Heart left ventricle (tissue), 16 donors: ENCODE measurements at regions of chr11 and their contacts with region 1.

Region 1: DNA sequence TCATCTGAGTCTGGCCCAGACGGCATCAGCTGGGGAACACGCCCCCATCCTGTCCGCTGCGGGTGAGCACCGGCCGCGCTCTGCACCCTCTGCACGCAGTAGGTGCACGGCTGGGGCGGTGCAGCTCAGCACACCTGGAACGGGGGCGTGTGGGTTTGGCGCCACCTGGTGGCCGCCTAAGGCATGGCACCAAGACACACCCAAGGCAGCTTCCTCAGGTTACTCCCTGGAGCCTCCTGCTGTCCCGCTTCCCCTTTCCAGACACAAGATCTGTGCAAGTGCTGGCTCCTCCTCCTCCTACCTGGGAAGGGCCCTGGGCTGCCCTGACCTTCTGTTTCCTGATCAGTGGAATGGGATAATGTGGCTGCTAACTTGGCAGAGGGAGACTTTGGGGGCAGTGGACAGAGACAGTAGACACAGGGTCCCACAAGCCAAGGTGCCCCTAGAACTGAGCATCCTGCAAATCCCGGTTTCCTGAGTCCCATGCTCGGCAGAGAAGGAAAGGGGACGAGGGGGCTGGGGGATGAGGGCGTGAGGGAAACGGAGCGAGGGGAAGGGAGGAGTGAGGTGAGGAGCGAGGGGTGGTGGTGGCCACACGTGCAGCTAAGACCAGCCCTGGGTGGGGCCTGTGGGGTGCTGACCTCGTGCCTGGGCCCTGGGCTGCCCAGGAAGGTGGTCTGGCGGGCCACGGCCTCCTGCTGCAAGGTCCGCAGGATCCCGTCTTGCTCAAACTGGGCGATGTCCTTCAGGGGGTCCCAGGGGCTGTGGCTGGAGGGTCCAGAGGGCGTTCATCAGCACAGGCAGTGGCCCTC is 34.8 kb upstream of the CARS1 start:
- DNase-seq: peak; percentile 57 to 87 (median 67)
- ATAC-seq: peak; percentile 54 to 68 (median 66)
- H3K4me3 ChIP-seq: no peak overlapping the region
- H3K27ac ChIP-seq: no peak overlapping the region
- H3K4me1 ChIP-seq: peaks cover 0 to 35% (median 17%) of the 10 kb centered on the region in 12 donors
- H3K27me3 ChIP-seq: no peaks in the 10 kb centered on the region
- CTCF ChIP-seq: peak; percentile 92 to 100 (median 99)
- POLR2A ChIP-seq: no peak

Region 2: DNA sequence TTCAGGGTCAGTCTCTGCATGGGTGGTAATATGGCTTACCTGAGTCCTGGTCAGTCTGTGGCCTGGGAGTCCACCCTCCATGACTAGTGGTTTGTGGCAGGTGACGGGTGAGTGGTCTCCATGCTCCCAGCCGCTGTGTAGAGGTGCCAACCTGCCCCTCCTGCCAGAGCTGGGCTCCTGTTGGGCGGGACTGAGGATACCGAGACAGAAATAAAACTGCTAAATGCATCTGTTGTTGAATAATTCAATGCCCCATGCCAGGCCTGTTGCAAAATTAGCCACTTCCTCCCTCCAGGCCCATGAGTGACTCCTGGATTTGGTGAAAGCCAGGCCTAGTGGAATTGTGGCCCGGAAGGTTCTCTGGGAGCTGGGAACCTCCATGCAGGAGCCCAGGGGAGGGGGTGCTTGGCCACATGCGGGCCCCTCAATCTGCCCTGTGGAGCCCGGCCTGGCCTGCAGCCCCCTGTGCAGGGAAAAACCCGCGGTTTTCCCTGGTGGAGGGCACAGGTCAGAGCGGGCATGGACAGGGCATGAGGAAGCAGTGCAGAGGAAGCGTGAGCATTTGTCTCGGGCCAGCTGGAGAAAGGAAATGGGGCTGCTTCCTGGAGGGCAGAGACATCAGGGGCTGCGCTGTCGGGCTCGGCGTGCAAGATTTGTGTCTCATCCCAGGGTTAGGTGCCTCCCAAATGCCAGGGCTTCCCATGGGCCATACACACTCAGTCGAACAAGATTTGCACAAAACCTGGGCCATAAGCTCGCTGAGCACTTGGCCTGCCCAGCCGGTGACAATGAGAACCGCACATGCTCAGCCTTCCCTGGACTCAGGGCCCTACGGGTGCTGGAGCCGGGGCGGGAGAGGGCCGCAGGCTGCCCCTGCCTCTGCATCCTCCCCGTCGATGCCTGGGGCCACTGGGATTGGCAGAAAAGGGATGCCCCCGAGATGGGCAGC is 580.3 kb before region 1 on chr11:
- intact Hi-C with region 1: no loop called
- DNase-seq: peak; percentile 40 to 72 (median 63)
- ATAC-seq: peak; percentile 40 to 67 (median 48)
- H3K4me3 ChIP-seq: no peak overlapping the region
- H3K27ac ChIP-seq: peak overlapping the region in 11 of 12 donors; percentile 32 to 79 (median 77)
- H3K4me1 ChIP-seq: peaks cover 0 to 79% (median 53%) of the 10 kb centered on the region in 12 donors
- H3K27me3 ChIP-seq: no peaks in the 10 kb centered on the region
- CTCF ChIP-seq: no peak
- POLR2A ChIP-seq: no peak

Region 3: DNA sequence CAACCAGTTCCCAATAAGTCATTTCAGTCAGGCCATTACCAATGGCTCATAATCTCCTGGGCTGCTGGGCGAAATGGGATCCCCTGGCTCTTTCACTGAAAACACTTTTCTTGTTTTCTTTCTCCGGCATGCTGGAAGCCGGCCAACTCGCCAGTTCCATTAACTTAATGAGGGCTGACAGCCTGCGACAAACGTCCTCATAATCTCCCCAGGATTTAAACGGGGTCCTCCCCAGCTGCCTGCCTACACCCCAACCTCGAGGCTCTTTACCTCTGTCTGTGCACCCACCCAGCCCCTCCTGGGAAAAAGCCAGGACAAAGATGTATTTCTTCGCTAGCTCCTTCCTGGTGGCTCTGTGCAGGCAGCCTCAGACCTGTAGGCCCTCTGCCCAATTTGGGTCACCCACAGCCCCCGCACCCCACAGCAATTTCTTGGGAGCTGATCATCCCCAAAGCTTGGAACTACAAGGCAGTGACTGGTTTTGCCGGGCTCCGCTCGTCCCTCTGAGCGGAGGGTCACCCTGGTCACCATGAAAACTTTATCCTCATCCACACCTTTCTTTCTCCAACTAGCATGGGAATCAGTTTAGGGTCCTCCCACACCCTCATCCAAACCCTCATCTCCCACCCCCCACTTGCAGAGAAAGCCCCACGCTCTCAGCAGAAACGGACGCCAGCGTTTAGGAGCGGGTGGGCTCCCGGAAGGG is 341.2 kb before region 1 on chr11:
- intact Hi-C with region 1: no loop called
- DNase-seq: peak in 3 of 5 donors; percentile 18 to 61 (median 22)
- ATAC-seq: no peak
- H3K4me3 ChIP-seq: no peak overlapping the region
- H3K27ac ChIP-seq: no peak overlapping the region
- H3K4me1 ChIP-seq: no peaks in the 10 kb centered on the region
- H3K27me3 ChIP-seq: no peaks in the 10 kb centered on the region
- CTCF ChIP-seq: no peak
- POLR2A ChIP-seq: no peak

Region 4: GRCh38 chr11:2975594-2975993 is 116.4 kb before region 1 on chr11:
- intact Hi-C with region 1: loop called in 2 of 10 experiments (anchors 5 kb)
- DNase-seq: peak in 1 of 5 donors; percentile 22
- ATAC-seq: peak; percentile 60 to 87 (median 78)
- H3K4me3 ChIP-seq: no peak overlapping the region
- H3K27ac ChIP-seq: no peak overlapping the region
- H3K4me1 ChIP-seq: peaks cover 0 to 28% (median 10%) of the 10 kb centered on the region in 12 donors
- H3K27me3 ChIP-seq: no peaks in the 10 kb centered on the region
- CTCF ChIP-seq: peak in 11 of 12 donors; percentile 24 to 54 (median 42)
- POLR2A ChIP-seq: no peak

Region 5: GRCh38 chr11:3037040-3037944 is 54.7 kb before region 1 on chr11:
- intact Hi-C with region 1: loop called (anchors 1 to 2 kb)
- DNase-seq: peak; percentile 79 to 90 (median 81)
- ATAC-seq: peak; percentile 59 to 79 (median 76)
- H3K4me3 ChIP-seq: no peak overlapping the region
- H3K27ac ChIP-seq: peak overlapping the region in 4 of 12 donors; percentile 18 to 58 (median 43)
- H3K4me1 ChIP-seq: peaks cover 0 to 32% (median 9%) of the 10 kb centered on the region in 12 donors
- H3K27me3 ChIP-seq: no peaks in the 10 kb centered on the region
- CTCF ChIP-seq: peak; percentile 72 to 91 (median 81)
- POLR2A ChIP-seq: no peak

Region 6: DNA sequence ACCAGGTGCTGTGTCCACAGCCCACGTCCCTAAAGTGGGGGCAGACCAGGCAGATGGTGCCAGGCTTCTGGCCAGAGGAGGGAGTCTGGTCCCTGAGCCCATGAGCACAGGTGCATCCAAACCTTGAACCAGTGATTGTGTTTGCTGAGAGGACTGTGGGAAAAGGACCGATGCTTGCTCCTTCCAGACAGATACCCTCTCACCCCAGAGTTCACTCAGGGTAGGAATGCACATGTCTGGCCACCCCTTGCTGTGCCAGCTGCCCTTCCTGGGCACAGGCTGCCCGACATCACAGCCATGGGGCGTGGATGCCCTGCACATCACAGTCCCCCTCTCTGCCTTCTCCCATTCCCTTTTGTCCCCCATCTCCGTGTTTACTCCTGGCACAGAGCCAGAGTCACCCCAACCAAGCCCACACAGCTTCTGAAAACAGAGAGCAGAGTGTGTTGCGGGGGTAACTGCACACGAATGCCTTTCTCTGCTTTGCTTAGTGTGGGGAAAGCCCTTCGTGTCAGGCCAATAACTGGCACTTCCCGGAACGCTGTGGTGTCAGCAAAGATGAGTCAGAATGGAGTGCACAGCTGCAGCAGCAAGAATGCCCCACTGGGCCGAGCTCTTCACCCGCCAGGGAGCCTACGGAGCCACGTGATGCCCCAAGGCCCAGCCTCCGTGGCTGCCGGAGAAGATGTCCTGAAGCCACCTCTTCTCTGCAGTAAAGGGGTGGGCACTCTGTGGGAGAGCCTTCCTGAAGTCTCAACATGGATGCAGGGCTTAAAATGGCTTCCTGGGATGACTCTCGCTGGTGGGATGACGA is 42.4 kb before region 1 on chr11:
- intact Hi-C with region 1: loop called in 1 of 10 experiments (anchors 5 kb)
- DNase-seq: peak; percentile 53 to 80 (median 69)
- ATAC-seq: peak; percentile 59 to 87 (median 86)
- H3K4me3 ChIP-seq: no peak overlapping the region
- H3K27ac ChIP-seq: peak overlapping the region in 5 of 12 donors; percentile 25 to 67 (median 49)
- H3K4me1 ChIP-seq: peaks cover 4 to 48% (median 31%) of the 10 kb centered on the region in 12 donors
- H3K27me3 ChIP-seq: no peaks in the 10 kb centered on the region
- CTCF ChIP-seq: peak in 3 of 12 donors; percentile 17 to 42 (median 41)
- POLR2A ChIP-seq: no peak

Region 7: DNA sequence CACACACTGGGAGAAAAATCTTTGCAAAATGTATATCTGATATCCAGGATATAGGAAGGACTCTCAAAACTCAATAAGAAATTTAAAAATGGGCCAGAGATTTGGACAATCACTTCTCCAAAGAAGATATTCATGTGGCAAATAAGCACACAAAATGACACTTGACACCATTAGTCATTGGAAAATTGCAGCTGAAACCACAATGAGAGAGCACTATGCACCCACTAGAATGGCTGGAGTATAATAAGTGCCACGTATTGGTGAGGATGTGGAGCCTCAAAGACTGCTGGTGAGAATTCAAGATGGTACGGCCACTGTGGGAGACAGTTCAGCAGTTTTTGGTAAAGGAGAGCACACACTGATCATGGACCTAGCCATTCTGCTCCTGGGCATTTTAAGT is 85.9 kb after region 1 on chr11:
- intact Hi-C with region 1: no loop called
- DNase-seq: no peak
- ATAC-seq: no peak
- H3K4me3 ChIP-seq: no peak overlapping the region
- H3K27ac ChIP-seq: no peak overlapping the region
- H3K4me1 ChIP-seq: no peaks in the 10 kb centered on the region
- H3K27me3 ChIP-seq: no peaks in the 10 kb centered on the region
- CTCF ChIP-seq: no peak
- POLR2A ChIP-seq: no peak

Region 8: GRCh38 chr11:3217676-3218482 is 125.9 kb after region 1 on chr11:
- intact Hi-C with region 1: loop called in 2 of 10 experiments (anchors 5 to 10 kb)
- DNase-seq: peak in 2 of 5 donors; percentile 11 to 51
- ATAC-seq: no peak
- H3K4me3 ChIP-seq: no peak overlapping the region
- H3K27ac ChIP-seq: no peak overlapping the region
- H3K4me1 ChIP-seq: peaks cover 0 to 15% (median 0%) of the 10 kb centered on the region in 12 donors
- H3K27me3 ChIP-seq: peaks cover 0 to 65% (median 27%) of the 10 kb centered on the region in 9 donors
- CTCF ChIP-seq: no peak
- POLR2A ChIP-seq: no peak